Dendritic cell treated with granulocyte-macrophage colony-stimulating factor and Interleukin-4, amounts not matched to agents 40 ng/mL and 50 ng/mL, for 4 days (primary cell): ENCODE measurements at regions of chr19 and their contacts with region 1.

Region 1: GRCh38 chr19:46704379-46705076 is 12.4 kb downstream of the PRKD2 start:
- H3K4me3 Mint-ChIP-seq: no peak overlapping the region
- H3K27ac Mint-ChIP-seq: no peak overlapping the region
- H3K4me1 Mint-ChIP-seq: no peaks in the 10 kb centered on the region
- H3K27me3 Mint-ChIP-seq: no peaks in the 10 kb centered on the region

Region 2: GRCh38 chr19:46404055-46404752 is 300.3 kb before region 1 on chr19:
- intact Hi-C with region 1: no loop called
- H3K4me3 Mint-ChIP-seq: peak overlapping the region; percentile 55
- H3K27ac Mint-ChIP-seq: peak overlapping the region; percentile 4
- H3K4me1 Mint-ChIP-seq: peaks cover 30% of the 10 kb centered on the region
- H3K27me3 Mint-ChIP-seq: peaks cover 83% of the 10 kb centered on the region

Region 3: DNA sequence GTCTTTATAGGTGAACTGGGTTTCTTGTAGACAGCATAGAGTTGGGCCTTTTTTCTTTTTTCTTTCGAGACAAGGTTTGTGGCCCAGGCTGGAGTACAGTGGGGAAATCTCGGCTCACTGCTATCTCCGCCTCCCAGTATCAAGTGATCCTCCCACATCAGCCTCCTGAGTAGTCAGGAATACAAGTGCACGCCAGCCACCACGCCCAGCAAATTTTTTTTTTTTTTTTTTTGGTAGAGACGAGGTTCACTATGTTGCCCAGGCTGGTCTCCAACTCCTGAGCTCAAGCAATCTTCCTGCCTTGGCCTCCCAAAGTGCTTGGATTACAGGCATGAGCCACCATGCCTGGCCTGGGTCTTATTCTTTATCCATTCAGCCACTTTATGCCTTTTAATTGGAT is 108.5 kb before region 1 on chr19:
- intact Hi-C with region 1: no loop called
- H3K4me3 Mint-ChIP-seq: no peak overlapping the region
- H3K27ac Mint-ChIP-seq: no peak overlapping the region
- H3K4me1 Mint-ChIP-seq: peaks cover 34% of the 10 kb centered on the region
- H3K27me3 Mint-ChIP-seq: peaks cover 8% of the 10 kb centered on the region

Region 4: GRCh38 chr19:46728693-46729676 is 24.5 kb after region 1 on chr19:
- intact Hi-C with region 1: loop called (anchors 1 kb)
- H3K4me3 Mint-ChIP-seq: no peak overlapping the region
- H3K27ac Mint-ChIP-seq: no peak overlapping the region
- H3K4me1 Mint-ChIP-seq: peaks cover 68% of the 10 kb centered on the region
- H3K27me3 Mint-ChIP-seq: no peaks in the 10 kb centered on the region

Region 5: DNA sequence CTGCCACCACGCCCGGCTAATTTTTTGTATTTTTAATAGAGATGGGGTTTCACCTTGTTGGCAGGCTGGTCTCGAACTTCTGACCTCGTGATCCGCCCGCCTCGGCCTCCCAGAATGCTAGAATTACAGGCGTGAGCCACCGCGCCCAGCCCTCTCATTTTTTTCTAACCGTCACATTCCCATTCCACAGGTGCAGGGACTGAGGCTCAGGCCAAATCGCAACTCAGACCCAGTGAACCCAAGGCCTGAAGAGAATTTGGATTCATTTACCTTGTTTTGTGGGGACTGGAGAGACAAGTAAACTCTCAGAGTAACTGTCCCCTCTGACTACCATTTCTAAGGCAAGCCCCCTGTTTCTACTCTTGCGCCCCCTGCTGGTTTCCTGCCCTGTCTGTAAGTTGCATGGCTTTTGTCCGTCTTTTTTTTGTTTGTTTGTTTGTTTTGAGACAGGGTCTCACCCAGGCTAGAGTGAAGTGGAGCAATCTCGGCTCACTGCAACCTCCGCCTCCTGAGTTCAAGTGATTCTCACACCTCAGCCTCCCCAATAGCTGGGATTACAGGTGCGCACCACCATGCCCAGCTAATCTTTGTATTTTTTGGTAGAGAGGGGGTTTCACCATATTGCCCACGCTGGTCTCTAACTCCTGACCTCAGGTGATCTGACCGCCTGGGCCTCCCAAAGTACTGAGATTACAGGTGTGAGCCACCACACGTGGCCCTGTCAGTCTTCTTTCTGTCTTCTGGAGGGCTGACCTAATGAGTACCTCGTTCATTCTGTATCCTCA is 44.0 kb after region 1 on chr19:
- intact Hi-C with region 1: loop called (anchors 1 kb)
- H3K4me3 Mint-ChIP-seq: no peak overlapping the region
- H3K27ac Mint-ChIP-seq: no peak overlapping the region
- H3K4me1 Mint-ChIP-seq: peaks cover 55% of the 10 kb centered on the region
- H3K27me3 Mint-ChIP-seq: no peaks in the 10 kb centered on the region